ENCODE measurements at regions of chr11 and their contacts with region 1.

Region 1: GRCh38 chr11:73982969-73983740 is 512 bp upstream of the UCP2 start:
- DNase-seq: peak; percentile 92
- ATAC-seq: peak; percentile 90
- H3K4me3 ChIP-seq: peak overlapping the region; percentile 79
- H3K27ac ChIP-seq: peak overlapping the region; percentile 85
- H3K4me1 ChIP-seq: peaks cover 28% of the 10 kb centered on the region
- H3K27me3 ChIP-seq: no peaks in the 10 kb centered on the region
- CTCF ChIP-seq: no peak

Region 2: DNA sequence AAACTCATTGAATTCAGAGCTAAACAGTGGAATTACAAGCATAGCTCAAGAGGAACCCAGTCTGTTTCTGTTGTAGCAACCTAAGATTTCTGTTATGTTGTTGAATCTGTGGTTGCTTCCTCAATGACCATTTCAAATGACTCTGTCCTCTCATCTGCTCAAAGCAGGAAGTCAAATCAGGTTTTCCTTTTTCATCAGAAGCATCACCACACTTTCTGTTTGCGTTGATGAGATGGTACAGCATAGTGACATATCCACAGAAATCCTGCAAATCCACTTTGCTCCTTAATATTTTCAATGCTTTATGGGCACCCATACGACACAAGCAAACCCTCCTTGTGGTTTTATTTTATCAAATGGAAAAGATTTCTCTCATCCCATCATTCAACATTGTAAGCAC is 12.1 kb after region 1 on chr11:
- CTCF ChIA-PET with region 1: no interaction called
- POLR2A ChIA-PET with region 1: no interaction called
- intact Hi-C with region 1: no loop called
- DNase-seq: no peak
- ATAC-seq: no peak
- H3K4me3 ChIP-seq: no peak overlapping the region
- H3K27ac ChIP-seq: no peak overlapping the region
- H3K4me1 ChIP-seq: peaks cover 14% of the 10 kb centered on the region
- H3K27me3 ChIP-seq: no peaks in the 10 kb centered on the region
- CTCF ChIP-seq: no peak

Region 3: GRCh38 chr11:74018331-74019005 is 35.3 kb after region 1 on chr11:
- CTCF ChIA-PET with region 1: no interaction called
- POLR2A ChIA-PET with region 1: interaction called, 17 read pairs
- intact Hi-C with region 1: no loop called
- DNase-seq: peak; percentile 88
- ATAC-seq: peak; percentile 94
- H3K4me3 ChIP-seq: no peak overlapping the region
- H3K27ac ChIP-seq: peak overlapping the region; percentile 78
- H3K4me1 ChIP-seq: peaks cover 16% of the 10 kb centered on the region
- H3K27me3 ChIP-seq: no peaks in the 10 kb centered on the region
- CTCF ChIP-seq: no peak

Measured in PC-3 (cell line).